ENCODE measurements at regions of chr1 and their contacts with region 1.

Region 1: DNA sequence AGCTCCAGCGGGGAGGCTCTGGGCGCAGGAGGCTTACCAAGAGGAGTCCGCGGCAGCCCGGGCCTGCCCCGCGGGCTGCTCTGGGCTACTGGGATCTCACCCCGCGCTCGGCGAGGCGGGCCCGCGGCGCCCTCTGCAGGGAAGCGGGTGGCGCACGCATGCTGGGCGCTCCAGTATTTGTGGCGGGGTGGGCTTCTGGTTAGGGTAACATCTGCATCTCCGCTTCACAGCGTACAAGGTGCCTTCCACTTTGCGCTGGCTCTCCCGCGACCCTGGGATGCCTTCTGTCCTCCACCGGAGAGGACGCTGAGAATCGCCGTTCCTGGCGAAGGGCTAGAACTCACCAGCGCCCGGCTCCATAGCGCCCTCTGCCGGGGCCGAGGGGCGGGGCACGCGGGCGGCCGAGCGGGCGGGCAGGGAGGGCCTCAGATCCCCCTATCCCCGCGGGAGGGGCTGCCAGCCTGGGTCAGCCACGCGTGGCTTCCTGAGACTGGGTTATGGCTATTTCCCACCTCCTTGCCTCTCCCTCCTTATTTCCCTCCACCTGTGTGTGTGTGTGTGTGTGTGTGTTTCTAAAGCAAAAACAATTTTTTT is 46.6 kb upstream of the CTBS start:
- DNase-seq: peak; percentile 85
- H3K4me3 Mint-ChIP-seq: peak overlapping the region; percentile 83
- H3K27ac Mint-ChIP-seq: peak overlapping the region; percentile 69
- H3K4me1 Mint-ChIP-seq: peaks cover 19% of the 10 kb centered on the region
- H3K27me3 Mint-ChIP-seq: no peaks in the 10 kb centered on the region

Region 2: DNA sequence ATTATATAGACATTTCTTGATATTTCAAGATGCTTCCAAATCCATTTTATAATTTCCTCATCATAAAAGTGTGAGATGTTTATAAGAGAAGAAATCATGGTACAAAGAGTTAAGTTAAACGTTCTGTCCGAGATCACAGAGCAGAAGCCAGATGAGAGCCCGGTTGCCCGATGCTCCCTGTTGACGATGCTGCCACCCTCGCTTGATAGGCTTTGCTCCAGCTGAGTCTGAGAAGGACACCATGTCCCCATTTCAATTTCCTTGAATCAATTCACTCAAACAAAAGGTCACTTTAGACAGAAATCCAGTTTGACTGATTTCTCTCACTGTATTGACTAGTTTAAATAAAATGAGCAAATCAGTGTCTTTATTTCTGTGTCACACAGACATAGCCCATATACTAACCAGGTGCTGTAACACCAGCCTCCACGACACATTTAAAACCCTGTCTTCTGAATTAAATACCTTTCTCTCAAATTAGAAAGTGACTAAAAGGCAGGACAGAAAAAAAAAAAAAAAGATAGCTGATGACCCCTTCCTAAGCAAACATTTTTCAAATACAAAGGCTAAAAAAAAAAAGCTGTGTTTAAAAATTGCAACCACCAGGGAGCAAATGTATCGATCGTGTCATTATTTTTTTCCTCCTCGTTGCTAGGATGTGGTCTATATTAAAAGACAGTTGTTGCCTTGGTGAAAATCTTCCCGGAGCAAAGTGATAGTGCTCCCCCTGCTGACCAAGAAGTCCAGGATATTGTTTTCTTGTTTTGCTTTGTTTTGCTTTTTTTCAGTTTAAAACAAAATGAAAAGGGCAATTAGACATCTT is 187.3 kb before region 1 on chr1:
- CTCF ChIA-PET with region 1: interaction called, 14 read pairs
- POLR2A ChIA-PET with region 1: no interaction called
- DNase-seq: peak; percentile 60
- H3K4me3 Mint-ChIP-seq: peak overlapping the region; percentile 47
- H3K27ac Mint-ChIP-seq: peak overlapping the region; percentile 1
- H3K4me1 Mint-ChIP-seq: peaks cover 10% of the 10 kb centered on the region
- H3K27me3 Mint-ChIP-seq: no peaks in the 10 kb centered on the region

Region 3: GRCh38 chr1:84442256-84442655 is 178.6 kb before region 1 on chr1:
- CTCF ChIA-PET with region 1: interaction called, 24 read pairs
- POLR2A ChIA-PET with region 1: interaction called, 7 read pairs
- DNase-seq: no peak
- H3K4me3 Mint-ChIP-seq: peak overlapping the region; percentile 38
- H3K27ac Mint-ChIP-seq: peak overlapping the region; percentile 83
- H3K4me1 Mint-ChIP-seq: peaks cover 22% of the 10 kb centered on the region
- H3K27me3 Mint-ChIP-seq: peaks cover 10% of the 10 kb centered on the region

Region 4: DNA sequence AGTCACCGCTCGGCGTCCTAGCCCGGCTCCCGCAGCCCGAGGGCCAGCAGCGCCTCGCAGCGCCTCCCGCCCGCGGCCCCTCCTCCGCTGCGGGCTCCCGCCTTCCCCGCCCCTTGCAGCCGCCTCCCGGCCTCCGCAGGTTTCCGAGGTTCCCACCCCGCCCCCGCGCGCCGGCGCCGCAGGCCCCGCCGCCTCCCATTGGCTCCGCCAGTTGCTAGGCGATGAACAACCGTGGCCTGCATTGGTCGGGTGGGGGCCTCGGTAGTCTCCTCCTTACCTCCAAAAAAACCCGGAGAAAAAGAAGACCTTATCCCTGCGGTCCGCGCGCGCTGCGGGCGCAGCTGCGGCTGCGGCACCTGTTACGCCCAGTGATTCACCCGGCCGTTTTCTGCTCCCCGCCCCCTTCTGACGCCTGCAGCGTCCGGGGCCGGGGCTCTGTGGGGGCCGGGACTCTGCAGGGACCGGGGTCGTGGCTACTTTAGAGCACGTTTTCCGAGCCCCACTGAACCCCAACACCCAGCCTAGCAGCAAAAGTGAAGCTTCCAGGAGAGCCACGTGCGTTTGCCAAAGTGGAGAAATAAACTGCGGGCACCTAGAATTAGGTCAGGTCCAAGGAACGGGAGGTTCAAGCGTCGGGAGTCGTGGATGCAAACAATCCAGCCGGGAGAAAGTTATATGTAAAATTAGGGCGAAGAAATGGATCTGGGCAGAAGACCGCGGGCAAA is 69.7 kb after region 1 on chr1 and contains the start of gene SSX2IP:
- CTCF ChIA-PET with region 1: interaction called, 12 read pairs
- POLR2A ChIA-PET with region 1: no interaction called
- DNase-seq: peak; percentile 99
- H3K4me3 Mint-ChIP-seq: peak within 1 kb of the TSS; percentile 87
- H3K27ac Mint-ChIP-seq: peak within 1 kb of the TSS; percentile 82
- H3K4me1 Mint-ChIP-seq: peaks cover 58% of the 10 kb centered on the region
- H3K27me3 Mint-ChIP-seq: no peaks in the 10 kb centered on the region
- total RNA-seq, gene SSX2IP: 16.8 to 18.8 TPM

Measured in activated CD4-positive, alpha-beta memory T cell treated with anti-CD3 and anti-CD28 coated beads, Interleukin-2, amount 10 ng/mL, durations not matched to agents 7 days and 5 days (primary cell).